ENCODE measurements at regions of chr17 and their contacts with region 1.

Region 1: GRCh38 chr17:44086364-44087311 is 16.1 kb downstream of the G6PC3 start:
- DNase-seq: peak; percentile 81
- H3K4me3 ChIP-seq: no peak overlapping the region
- H3K27ac ChIP-seq: peak overlapping the region in 1 of 2 experiments; percentile 75; a peak in 3 of 4 replicates
- H3K4me1 ChIP-seq: peaks cover 12 to 15% of the 10 kb centered on the region in 2 experiments; a peak in 3 of 4 replicates
- H3K27me3 ChIP-seq: no peaks in the 10 kb centered on the region
- CTCF ChIP-seq: no peak
- EP300 ChIP-seq: no peak
- RAD21 ChIP-seq: no peak

Region 2: GRCh38 chr17:44070455-44071197 is 16.0 kb before region 1 on chr17 and contains the start of gene G6PC3:
- CTCF ChIA-PET with region 1: interaction called, 20 read pairs
- POLR2A ChIA-PET with region 1: interaction called, 3 read pairs
- DNase-seq: peak; percentile 99
- H3K4me3 ChIP-seq: peak within 1 kb of the TSS; percentile 68 to 82
- H3K27ac ChIP-seq: peak within 1 kb of the TSS; percentile 95 to 96
- H3K4me1 ChIP-seq: peaks cover 9 to 11% of the 10 kb centered on the region in 2 experiments
- H3K27me3 ChIP-seq: no peaks in the 10 kb centered on the region
- CTCF ChIP-seq: no peak; the same call in 1 of the 2 replicates
- EP300 ChIP-seq: peak; percentile 39 to 47; a peak in 2 of 4 replicates
- RAD21 ChIP-seq: no peak
- polyA plus RNA-seq, gene G6PC3: 158 and 166 TPM in 2 replicates

Region 3: DNA sequence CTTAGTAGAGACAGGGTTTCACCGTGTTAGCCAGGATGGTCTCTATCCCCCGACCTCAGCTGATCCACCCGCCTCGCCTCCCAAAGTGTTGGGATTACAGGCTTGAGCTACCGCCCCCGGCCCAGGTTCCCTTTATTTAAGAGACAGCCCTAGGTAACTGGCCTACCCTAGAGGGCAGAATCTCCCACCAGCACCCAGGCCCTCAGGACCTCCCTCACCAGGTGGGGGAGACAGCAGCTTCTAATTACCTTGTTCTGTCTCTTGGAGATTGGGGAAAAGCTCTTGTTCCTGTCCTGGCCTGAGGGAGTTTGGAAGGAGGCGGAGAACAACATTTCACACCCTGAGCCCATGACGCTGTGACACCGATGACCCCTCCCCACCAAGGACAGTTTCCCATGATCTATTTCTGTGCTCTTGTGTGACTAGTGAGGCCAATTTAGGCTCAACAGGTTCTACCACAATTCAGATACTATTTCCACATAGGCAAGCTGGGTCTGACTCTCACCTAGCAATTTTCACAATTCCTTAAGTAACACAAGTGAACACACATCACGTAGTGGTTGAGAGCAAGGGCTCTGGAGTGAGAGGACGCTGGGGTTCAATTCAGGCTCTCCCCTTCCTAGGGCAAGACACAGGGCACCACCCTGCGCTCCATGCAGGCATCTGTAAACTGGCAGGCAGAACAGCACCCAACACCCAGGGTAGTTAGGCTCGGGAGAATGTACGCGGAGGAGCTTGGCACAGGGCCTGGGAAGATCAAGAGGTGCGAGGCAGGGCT is 16.4 kb after region 1 on chr17:
- CTCF ChIA-PET with region 1: interaction called, 16 read pairs
- POLR2A ChIA-PET with region 1: interaction called, 3 read pairs
- DNase-seq: no peak
- H3K4me3 ChIP-seq: no peak overlapping the region
- H3K27ac ChIP-seq: no peak overlapping the region
- H3K4me1 ChIP-seq: peaks cover 9 to 15% of the 10 kb centered on the region in 2 experiments; a peak in 3 of 4 replicates
- H3K27me3 ChIP-seq: no peaks in the 10 kb centered on the region
- CTCF ChIP-seq: no peak
- EP300 ChIP-seq: no peak
- RAD21 ChIP-seq: no peak

Measured in SK-N-SH (cell line).